ENCODE measurements at regions of chr1 and their contacts with region 1.

Region 1: GRCh38 chr1:40668769-40669525 is 3.5 kb upstream of the RIMS3 start:
- DNase-seq: peak; percentile 81 to 92
- ATAC-seq: peak; percentile 72 to 84 (median 82)
- H3K4me3 ChIP-seq: no peak overlapping the region
- H3K4me3 Mint-ChIP-seq: peak overlapping the region; percentile 50
- H3K27ac ChIP-seq: no peak overlapping the region
- H3K27ac Mint-ChIP-seq: peak overlapping the region in 1 of 2 donors; percentile 44
- H3K4me1 ChIP-seq: peaks cover 18% of the 10 kb centered on the region
- H3K4me1 Mint-ChIP-seq: peaks cover 0 to 14% of the 10 kb centered on the region in 2 donors
- H3K27me3 ChIP-seq: no peaks in the 10 kb centered on the region
- H3K27me3 Mint-ChIP-seq: no peaks in the 10 kb centered on the region
- CTCF ChIP-seq: peak; percentile 90

Region 2: DNA sequence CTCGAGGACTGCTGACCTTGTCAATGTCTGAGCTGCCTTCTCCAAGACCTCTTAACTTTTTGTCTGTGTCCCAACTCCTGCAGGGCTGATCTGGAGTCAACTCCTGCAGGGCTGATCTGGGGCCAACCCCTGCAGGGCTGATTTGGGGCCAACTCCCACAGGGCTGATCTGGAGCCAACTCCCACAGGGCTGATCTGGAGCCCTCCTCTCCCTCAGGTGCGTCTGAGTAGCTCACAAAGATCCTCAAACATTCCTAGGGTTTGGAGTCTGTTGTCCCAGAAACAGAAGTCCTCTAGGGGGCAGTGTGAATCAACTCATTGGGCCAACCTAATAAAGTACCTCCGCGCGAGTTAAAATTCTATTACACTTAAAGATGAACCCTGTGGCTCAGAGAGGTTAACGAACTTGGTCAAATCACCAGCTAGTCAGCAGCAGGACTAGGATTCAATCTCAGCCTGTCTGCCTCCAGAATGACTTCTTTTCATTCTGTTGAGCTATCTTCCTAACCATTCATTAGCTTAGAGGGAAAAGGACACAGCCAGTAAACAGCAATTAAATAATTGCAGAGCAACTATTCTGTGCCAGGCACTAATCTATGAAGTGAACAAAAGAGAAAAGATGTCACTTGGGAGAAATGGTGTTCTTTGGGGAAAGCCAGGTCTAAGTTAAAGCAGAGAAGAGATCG is 524.9 kb before region 1 on chr1:
- intact Hi-C with region 1: loop called (anchors 10 kb)
- DNase-seq: peak in 1 of 2 donors; percentile 85
- ATAC-seq: peak; percentile 75 to 84 (median 82)
- H3K4me3 ChIP-seq: no peak overlapping the region
- H3K4me3 Mint-ChIP-seq: no peak overlapping the region
- H3K27ac ChIP-seq: no peak overlapping the region
- H3K27ac Mint-ChIP-seq: no peak overlapping the region
- H3K4me1 ChIP-seq: no peaks in the 10 kb centered on the region
- H3K4me1 Mint-ChIP-seq: peaks cover 4 to 6% of the 10 kb centered on the region in 2 donors
- H3K27me3 ChIP-seq: peaks cover 2% of the 10 kb centered on the region
- H3K27me3 Mint-ChIP-seq: peaks cover 35 to 50% of the 10 kb centered on the region in 2 donors
- CTCF ChIP-seq: peak; percentile 79

Region 3: GRCh38 chr1:40612345-40612831 is 56.6 kb before region 1 on chr1:
- intact Hi-C with region 1: loop called (anchors 1 kb)
- DNase-seq: peak; percentile 38 to 85
- ATAC-seq: peak; percentile 81 to 97 (median 86)
- H3K4me3 ChIP-seq: no peak overlapping the region
- H3K4me3 Mint-ChIP-seq: no peak overlapping the region
- H3K27ac ChIP-seq: no peak overlapping the region
- H3K27ac Mint-ChIP-seq: no peak overlapping the region
- H3K4me1 ChIP-seq: no peaks in the 10 kb centered on the region
- H3K4me1 Mint-ChIP-seq: no peaks in the 10 kb centered on the region
- H3K27me3 ChIP-seq: no peaks in the 10 kb centered on the region
- H3K27me3 Mint-ChIP-seq: peaks cover under 1 to 5% of the 10 kb centered on the region in 2 donors
- CTCF ChIP-seq: peak; percentile 82

Region 4: DNA sequence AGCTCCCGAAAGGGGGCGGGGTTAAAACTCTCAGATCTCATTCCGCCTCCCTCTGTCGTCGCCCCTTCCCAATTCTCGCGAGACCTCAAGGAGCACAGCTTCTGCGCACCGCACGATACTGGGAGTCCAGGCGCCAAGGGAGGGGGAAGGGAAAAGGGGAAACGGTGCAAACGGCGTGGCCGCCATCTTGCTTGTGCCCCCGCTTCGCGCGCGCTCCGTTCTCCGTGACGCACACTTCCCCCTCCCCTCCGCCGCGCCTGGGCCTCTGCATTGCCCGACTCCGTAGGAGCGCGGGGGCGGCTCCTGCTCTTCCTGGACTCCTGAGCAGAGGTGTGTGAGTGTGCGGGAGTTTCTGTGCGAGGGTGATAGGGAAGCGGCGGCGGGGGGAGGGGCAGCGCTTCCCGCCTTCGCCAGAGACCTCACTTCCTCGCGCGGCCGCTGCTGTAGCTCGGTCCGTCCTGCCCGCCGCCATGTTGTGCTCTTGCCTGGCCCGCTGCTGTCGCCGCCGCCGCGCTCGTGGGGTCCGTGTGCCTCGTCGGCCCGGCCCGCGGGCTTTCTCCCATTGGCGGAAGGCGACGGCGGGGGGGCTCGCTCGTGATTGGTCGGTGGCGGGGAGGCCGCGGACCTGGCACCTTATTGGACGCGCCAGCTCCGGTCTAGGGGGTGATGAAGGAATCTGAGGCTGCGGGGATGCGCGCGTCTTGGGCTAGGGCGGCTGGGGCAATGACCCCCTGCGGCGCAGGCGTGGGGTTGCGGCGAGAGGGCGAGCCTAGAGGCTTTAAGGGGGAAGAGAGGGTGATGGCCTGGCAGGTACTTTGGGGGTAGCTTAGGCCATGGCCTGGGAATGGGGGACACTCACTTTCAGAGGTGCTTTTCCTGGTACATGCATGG is 22.8 kb after region 1 on chr1 and contains the start of gene NFYC:
- intact Hi-C with region 1: loop called (anchors 2 kb)
- DNase-seq: peak; percentile 92 to 99
- ATAC-seq: peak; percentile 75 to 91 (median 83)
- H3K4me3 ChIP-seq: peak within 1 kb of the TSS; percentile 98
- H3K4me3 Mint-ChIP-seq: peak within 1 kb of the TSS; percentile 99
- H3K27ac ChIP-seq: peak within 1 kb of the TSS; percentile 99
- H3K27ac Mint-ChIP-seq: peak within 1 kb of the TSS; percentile 96 to 98
- H3K4me1 ChIP-seq: peaks cover 20% of the 10 kb centered on the region
- H3K4me1 Mint-ChIP-seq: peaks cover 59% of the 10 kb centered on the region in 2 donors
- H3K27me3 ChIP-seq: no peaks in the 10 kb centered on the region
- H3K27me3 Mint-ChIP-seq: no peaks in the 10 kb centered on the region
- CTCF ChIP-seq: no peak
- total RNA-seq, gene NFYC: 38.7 to 60.4 (median 48.5) TPM

Region 5: GRCh38 chr1:40862008-40862863 is 193.3 kb after region 1 on chr1 and contains the start of gene CITED4:
- intact Hi-C with region 1: loop called (anchors 1 kb)
- DNase-seq: peak; percentile 95 to 97
- ATAC-seq: peak; percentile 97 to 99 (median 98)
- H3K4me3 ChIP-seq: peak within 1 kb of the TSS; percentile 55
- H3K4me3 Mint-ChIP-seq: peak within 1 kb of the TSS; percentile 89
- H3K27ac ChIP-seq: peak within 1 kb of the TSS; percentile 62
- H3K27ac Mint-ChIP-seq: peak within 1 kb of the TSS; percentile 72 to 89
- H3K4me1 ChIP-seq: peaks cover 15% of the 10 kb centered on the region
- H3K4me1 Mint-ChIP-seq: peaks cover 7 to 14% of the 10 kb centered on the region in 2 donors
- H3K27me3 ChIP-seq: no peaks in the 10 kb centered on the region
- H3K27me3 Mint-ChIP-seq: peaks cover 23 to 24% of the 10 kb centered on the region in 2 donors
- CTCF ChIP-seq: no peak
- total RNA-seq, gene CITED4: 3.5 to 7.7 (median 4.9) TPM

Measured in natural killer cell (primary cell).